ENCODE measurements at regions of chr3 and their contacts with region 1.

Region 1: GRCh38 chr3:156816800-156817645 is 9.1 kb upstream of the LEKR1 start:
- DNase-seq: peak; percentile 79 to 85 (median 84)
- H3K4me3 ChIP-seq: peak overlapping the region; percentile 43 to 59
- H3K4me3 Mint-ChIP-seq: peak overlapping the region; percentile 91 to 97 (median 96)
- H3K27ac ChIP-seq: peak overlapping the region; percentile 73
- H3K27ac Mint-ChIP-seq: peak overlapping the region; percentile 91 to 98 (median 94)
- H3K4me1 ChIP-seq: peaks cover 39% of the 10 kb centered on the region
- H3K4me1 Mint-ChIP-seq: peaks cover 22 to 45% (median 35%) of the 10 kb centered on the region in 4 donors
- H3K27me3 ChIP-seq: no peaks in the 10 kb centered on the region
- H3K27me3 Mint-ChIP-seq: no peaks in the 10 kb centered on the region

Region 2: DNA sequence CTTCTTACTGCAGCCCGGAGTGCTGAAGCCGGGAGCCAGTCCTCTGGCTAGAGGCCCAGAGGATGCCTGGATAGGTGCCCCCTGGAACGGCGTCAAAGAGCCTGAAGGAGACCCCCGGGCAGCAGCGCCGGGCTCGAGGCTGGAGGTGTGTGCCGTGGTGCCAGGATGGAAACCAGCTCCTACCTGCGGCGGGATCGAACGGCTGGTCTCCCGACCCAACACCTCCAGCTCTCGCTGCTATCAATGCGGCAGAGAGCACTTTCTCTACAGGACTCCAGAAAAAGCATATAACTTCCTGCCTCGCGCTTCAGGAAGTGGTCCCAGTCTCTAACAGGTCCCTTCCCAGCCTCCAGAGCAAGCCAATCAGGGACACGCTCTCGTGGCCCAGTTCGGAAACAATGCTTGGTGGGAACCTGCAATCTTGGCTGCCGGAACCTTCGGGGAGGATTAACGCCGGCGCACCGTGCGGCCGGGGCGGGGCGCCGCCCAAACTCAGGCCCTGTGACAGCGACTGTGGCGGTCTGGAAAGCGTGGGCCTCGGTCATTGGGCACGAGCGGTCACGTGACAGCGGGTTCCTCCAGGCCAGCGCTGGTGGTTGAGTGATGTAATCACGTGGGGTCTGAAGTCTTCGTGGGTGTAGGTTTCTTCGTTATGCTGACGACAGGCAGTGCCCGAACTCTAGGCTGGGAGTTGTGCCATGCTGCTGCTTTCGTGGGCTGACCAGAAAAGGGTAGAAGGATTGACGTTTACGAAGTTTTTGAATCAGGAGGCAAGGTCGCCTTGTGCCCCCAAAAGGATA is 962.7 kb before region 1 on chr3 and contains the start of gene SLC33A1:
- CTCF ChIA-PET with region 1: no interaction called
- POLR2A ChIA-PET with region 1: no interaction called
- intact Hi-C with region 1: loop called (anchors 10 kb)
- DNase-seq: peak; percentile 99
- H3K4me3 ChIP-seq: peak within 1 kb of the TSS; percentile 98
- H3K4me3 Mint-ChIP-seq: peak within 1 kb of the TSS; percentile 89 to 98 (median 96)
- H3K27ac ChIP-seq: peak within 1 kb of the TSS; percentile 77
- H3K27ac Mint-ChIP-seq: peak within 1 kb of the TSS; percentile 94 to 100 (median 99)
- H3K4me1 ChIP-seq: peaks cover 44% of the 10 kb centered on the region
- H3K4me1 Mint-ChIP-seq: peaks cover 27 to 58% (median 38%) of the 10 kb centered on the region in 4 donors
- H3K27me3 ChIP-seq: no peaks in the 10 kb centered on the region
- H3K27me3 Mint-ChIP-seq: no peaks in the 10 kb centered on the region
- total RNA-seq, gene SLC33A1: 44.9 to 45.8 TPM

Region 3: GRCh38 chr3:156341831-156342416 is 475.1 kb before region 1 on chr3:
- CTCF ChIA-PET with region 1: no interaction called
- POLR2A ChIA-PET with region 1: no interaction called
- intact Hi-C with region 1: no loop called
- DNase-seq: no peak
- H3K4me3 ChIP-seq: no peak overlapping the region
- H3K4me3 Mint-ChIP-seq: no peak overlapping the region
- H3K27ac ChIP-seq: no peak overlapping the region
- H3K27ac Mint-ChIP-seq: no peak overlapping the region
- H3K4me1 ChIP-seq: no peaks in the 10 kb centered on the region
- H3K4me1 Mint-ChIP-seq: peaks cover 0 to 1% (median under 1%) of the 10 kb centered on the region in 4 donors
- H3K27me3 ChIP-seq: no peaks in the 10 kb centered on the region
- H3K27me3 Mint-ChIP-seq: peaks cover 15 to 16% of the 10 kb centered on the region in 2 donors

Region 4: GRCh38 chr3:156681002-156681401 is 136.0 kb before region 1 on chr3:
- CTCF ChIA-PET with region 1: interaction called, 8 read pairs
- POLR2A ChIA-PET with region 1: interaction called, 90 read pairs
- intact Hi-C with region 1: no loop called
- DNase-seq: no peak
- H3K4me3 ChIP-seq: no peak overlapping the region
- H3K4me3 Mint-ChIP-seq: peak overlapping the region; percentile 65 to 73 (median 68)
- H3K27ac ChIP-seq: no peak overlapping the region
- H3K27ac Mint-ChIP-seq: peak overlapping the region in 6 of 7 donors; percentile 17 to 75 (median 62)
- H3K4me1 ChIP-seq: peaks cover 99% of the 10 kb centered on the region
- H3K4me1 Mint-ChIP-seq: peaks cover 64 to 93% (median 81%) of the 10 kb centered on the region in 4 donors
- H3K27me3 ChIP-seq: no peaks in the 10 kb centered on the region
- H3K27me3 Mint-ChIP-seq: no peaks in the 10 kb centered on the region

Region 5: DNA sequence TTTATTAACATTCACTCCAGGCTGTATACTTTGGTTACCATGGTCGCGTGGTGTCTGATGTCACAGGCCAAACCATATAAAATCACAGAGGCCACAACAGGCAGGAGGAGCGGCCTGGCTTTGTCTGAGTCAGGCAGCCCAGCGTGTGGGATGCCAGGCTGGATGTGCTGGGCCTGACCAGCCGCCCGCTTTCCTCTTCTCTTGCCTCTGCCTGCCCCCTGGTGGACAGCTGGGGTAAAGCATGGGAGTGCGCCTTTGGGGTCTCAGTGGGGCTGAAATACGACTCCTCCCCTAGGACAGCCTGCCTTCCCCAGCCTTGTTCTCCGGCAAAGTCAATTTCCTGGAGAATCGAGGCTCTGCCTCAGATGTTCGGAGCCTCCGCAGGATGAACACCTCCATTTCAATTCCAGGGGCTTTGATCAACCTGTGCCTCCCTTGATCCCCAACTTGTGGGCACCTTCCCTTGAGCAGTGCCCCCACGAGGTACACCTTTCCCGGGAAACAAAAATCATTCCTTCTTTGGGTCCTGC is 264.7 kb after region 1 on chr3:
- CTCF ChIA-PET with region 1: no interaction called
- POLR2A ChIA-PET with region 1: interaction called, 12 read pairs
- intact Hi-C with region 1: loop called (anchors 1 kb)
- DNase-seq: peak; percentile 82 to 92 (median 83)
- H3K4me3 ChIP-seq: no peak overlapping the region
- H3K4me3 Mint-ChIP-seq: peak overlapping the region in 5 of 8 donors; percentile 11 to 39 (median 21)
- H3K27ac ChIP-seq: peak overlapping the region; percentile 55
- H3K27ac Mint-ChIP-seq: peak overlapping the region; percentile 85 to 96 (median 89)
- H3K4me1 ChIP-seq: peaks cover 20% of the 10 kb centered on the region
- H3K4me1 Mint-ChIP-seq: peaks cover 10 to 29% (median 17%) of the 10 kb centered on the region in 4 donors
- H3K27me3 ChIP-seq: no peaks in the 10 kb centered on the region
- H3K27me3 Mint-ChIP-seq: no peaks in the 10 kb centered on the region

Region 6: DNA sequence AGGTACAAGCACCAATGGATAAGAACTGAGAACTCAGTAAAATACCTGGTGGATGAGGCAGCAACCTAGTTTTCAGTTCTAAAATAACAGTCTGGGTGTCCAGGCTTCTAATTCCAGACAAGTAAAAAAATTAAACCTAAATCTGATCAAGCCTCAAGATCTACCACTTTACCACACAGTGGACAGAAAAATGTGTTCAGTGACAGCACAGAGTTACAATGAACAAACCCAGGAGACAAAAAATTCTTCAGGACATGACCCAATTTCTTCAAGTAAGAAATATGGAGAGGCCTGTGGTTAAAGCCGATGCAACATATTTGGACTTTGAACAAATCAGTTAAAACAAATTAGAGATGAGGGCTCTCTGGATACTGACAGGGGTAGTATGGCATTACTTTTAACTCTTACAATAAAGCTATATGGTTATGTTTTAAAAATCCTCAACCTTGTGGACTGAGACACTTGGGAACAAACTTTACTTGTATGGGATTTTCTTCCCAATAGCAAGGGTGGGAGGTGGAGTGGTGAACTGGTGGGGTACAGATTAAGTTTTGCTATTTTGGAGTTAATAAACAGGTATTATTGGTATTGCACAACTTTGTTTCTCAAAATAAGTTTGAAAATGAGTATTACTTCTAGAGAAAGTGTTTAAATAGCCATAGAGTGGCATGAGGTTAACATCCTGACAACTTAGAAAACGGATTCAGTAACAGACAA is 328.7 kb after region 1 on chr3:
- CTCF ChIA-PET with region 1: no interaction called
- POLR2A ChIA-PET with region 1: no interaction called
- intact Hi-C with region 1: no loop called
- DNase-seq: no peak
- H3K4me3 ChIP-seq: no peak overlapping the region
- H3K4me3 Mint-ChIP-seq: no peak overlapping the region
- H3K27ac ChIP-seq: no peak overlapping the region
- H3K27ac Mint-ChIP-seq: peak overlapping the region; percentile 2 to 85 (median 72)
- H3K4me1 ChIP-seq: peaks cover 20% of the 10 kb centered on the region
- H3K4me1 Mint-ChIP-seq: peaks cover 13 to 35% (median 22%) of the 10 kb centered on the region in 4 donors
- H3K27me3 ChIP-seq: no peaks in the 10 kb centered on the region
- H3K27me3 Mint-ChIP-seq: no peaks in the 10 kb centered on the region

Region 7: DNA sequence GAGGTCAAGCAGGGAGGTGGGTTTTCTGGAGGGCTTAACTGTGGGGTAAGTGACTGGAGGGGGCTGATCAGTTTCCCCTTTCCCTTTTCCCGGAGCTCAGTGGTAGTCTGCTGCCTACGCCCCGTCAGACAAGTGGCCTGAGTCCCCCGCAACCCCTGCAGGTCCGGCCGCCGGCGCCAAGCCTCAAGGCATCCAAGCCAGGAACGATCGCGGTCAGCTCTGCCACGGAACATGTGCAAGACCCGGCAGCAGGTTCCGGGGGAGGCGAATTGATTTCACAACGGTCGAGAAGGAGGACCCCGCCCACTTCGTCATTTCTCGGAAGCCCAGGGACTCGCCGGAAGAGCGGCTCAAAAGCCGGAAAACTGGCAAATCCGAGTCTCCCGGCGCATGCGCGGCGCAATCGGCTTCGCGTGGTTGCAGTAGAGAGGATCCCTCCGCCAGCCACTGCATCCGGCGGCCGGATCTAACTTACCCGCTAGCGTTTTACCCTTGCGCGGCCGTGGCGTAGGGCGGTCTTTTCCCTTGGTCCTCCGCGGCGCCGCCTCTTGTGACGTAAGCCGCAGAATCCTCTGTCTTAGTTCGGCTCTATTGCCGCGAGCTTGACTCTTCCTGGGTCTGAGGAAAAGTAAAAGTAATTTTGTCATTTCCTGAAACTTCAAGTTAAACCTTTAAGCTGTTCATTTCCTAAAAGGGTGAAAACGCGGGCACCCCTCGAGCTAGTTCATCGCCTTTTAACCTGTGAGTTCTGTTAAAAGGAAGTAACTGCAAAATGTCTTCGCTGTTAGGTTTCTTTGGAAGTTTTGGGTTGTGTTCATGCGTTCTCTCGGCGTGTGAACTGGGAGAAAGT is 357.9 kb after region 1 on chr3:
- CTCF ChIA-PET with region 1: no interaction called
- POLR2A ChIA-PET with region 1: interaction called, 13 read pairs
- intact Hi-C with region 1: loop called (anchors 1 kb)
- DNase-seq: peak; percentile 95 to 99 (median 99)
- H3K4me3 ChIP-seq: peak overlapping the region; percentile 82 to 95
- H3K4me3 Mint-ChIP-seq: peak overlapping the region; percentile 85 to 96 (median 93)
- H3K27ac ChIP-seq: peak overlapping the region; percentile 94
- H3K27ac Mint-ChIP-seq: peak overlapping the region; percentile 94 to 99 (median 98)
- H3K4me1 ChIP-seq: peaks cover 22% of the 10 kb centered on the region
- H3K4me1 Mint-ChIP-seq: peaks cover 10 to 30% (median 21%) of the 10 kb centered on the region in 4 donors
- H3K27me3 ChIP-seq: no peaks in the 10 kb centered on the region
- H3K27me3 Mint-ChIP-seq: no peaks in the 10 kb centered on the region